Heart left ventricle (tissue), 16 donors: ENCODE measurements at regions of chr18 and their contacts with region 1.

Region 1: DNA sequence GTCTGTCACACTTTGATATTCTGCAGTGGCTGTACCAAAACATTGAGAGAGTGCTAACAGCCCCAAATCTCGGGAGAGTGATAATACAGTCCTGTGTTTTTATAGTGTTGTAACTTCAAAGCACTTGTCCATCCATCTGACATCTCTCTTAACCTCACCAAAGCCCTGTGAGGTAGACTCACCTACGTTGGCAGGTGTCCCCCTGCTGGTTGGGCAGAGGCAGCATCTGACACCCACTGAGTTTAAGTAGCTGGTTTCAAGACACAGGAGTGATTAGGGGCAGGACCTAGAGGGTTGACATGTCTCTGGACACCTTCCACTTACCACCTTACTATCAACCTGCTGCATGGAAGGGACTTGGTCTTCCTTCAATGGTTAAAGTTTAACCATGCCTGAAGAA is 22.9 kb downstream of the COLEC12 start:
- DNase-seq: no peak
- ATAC-seq: no peak
- H3K4me3 ChIP-seq: no peak overlapping the region
- H3K27ac ChIP-seq: peak overlapping the region in 1 of 12 donors; percentile 58
- H3K4me1 ChIP-seq: peaks cover 0 to 33% (median 6%) of the 10 kb centered on the region in 12 donors
- H3K27me3 ChIP-seq: no peaks in the 10 kb centered on the region
- CTCF ChIP-seq: peak in 1 of 12 donors; percentile 12
- POLR2A ChIP-seq: no peak

Region 2: GRCh38 chr18:293536-293935 is 184.0 kb before region 1 on chr18:
- intact Hi-C with region 1: loop called in 1 of 10 experiments (anchors 10 kb)
- DNase-seq: no peak
- ATAC-seq: no peak
- H3K4me3 ChIP-seq: no peak overlapping the region
- H3K27ac ChIP-seq: no peak overlapping the region
- H3K4me1 ChIP-seq: peaks cover 0 to 7% (median 0%) of the 10 kb centered on the region in 12 donors
- H3K27me3 ChIP-seq: no peaks in the 10 kb centered on the region
- CTCF ChIP-seq: peak in 5 of 12 donors; percentile 8 to 35 (median 25)
- POLR2A ChIP-seq: no peak

Region 3: GRCh38 chr18:427005-427404 is 50.6 kb before region 1 on chr18:
- intact Hi-C with region 1: no loop called
- DNase-seq: peak in 1 of 5 donors; percentile 20
- ATAC-seq: peak; percentile 42 to 76 (median 68)
- H3K4me3 ChIP-seq: no peak overlapping the region
- H3K27ac ChIP-seq: no peak overlapping the region
- H3K4me1 ChIP-seq: peaks cover 0 to 22% (median 12%) of the 10 kb centered on the region in 12 donors
- H3K27me3 ChIP-seq: no peaks in the 10 kb centered on the region
- CTCF ChIP-seq: no peak
- POLR2A ChIP-seq: no peak

Region 4: DNA sequence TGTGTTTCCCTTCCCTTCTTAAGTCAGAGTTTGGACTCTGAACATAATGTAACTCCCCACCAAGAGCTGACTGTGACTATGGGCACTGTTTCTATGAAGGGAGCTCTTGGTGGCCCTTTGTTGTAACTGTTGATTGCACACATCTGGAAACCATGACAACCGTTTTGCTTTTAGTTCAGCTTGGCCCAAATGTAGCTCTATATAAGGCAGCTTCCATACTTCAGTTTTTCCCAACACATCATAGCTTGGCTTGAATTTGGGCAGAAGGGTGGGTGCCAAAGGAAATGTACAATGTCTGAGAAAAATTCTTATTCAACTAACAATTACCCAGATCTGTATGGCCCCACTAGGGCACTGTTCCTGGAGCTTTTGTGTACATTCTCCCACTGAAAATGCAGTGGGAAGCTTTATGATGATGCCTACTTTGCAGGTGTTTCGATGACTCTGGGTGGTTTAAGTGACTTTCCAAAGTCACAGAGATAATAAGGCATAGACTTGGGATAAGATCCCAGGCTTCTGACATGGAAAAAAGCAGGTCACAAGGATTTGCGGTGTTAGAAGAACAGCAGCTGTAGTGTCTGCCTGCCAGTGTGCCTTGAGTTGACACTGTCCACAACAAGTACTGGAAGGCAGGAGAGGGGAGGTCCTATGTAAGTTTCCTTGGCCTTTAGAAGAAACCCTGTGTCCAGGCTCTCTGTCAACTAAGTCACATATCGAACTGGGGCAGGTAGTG is 100.2 kb after region 1 on chr18:
- intact Hi-C with region 1: loop called in 1 of 10 experiments (anchors 10 kb)
- DNase-seq: no peak
- ATAC-seq: no peak
- H3K4me3 ChIP-seq: no peak overlapping the region
- H3K27ac ChIP-seq: no peak overlapping the region
- H3K4me1 ChIP-seq: peaks cover 0 to 25% (median 0%) of the 10 kb centered on the region in 12 donors
- H3K27me3 ChIP-seq: no peaks in the 10 kb centered on the region
- CTCF ChIP-seq: no peak
- POLR2A ChIP-seq: no peak

Region 5: DNA sequence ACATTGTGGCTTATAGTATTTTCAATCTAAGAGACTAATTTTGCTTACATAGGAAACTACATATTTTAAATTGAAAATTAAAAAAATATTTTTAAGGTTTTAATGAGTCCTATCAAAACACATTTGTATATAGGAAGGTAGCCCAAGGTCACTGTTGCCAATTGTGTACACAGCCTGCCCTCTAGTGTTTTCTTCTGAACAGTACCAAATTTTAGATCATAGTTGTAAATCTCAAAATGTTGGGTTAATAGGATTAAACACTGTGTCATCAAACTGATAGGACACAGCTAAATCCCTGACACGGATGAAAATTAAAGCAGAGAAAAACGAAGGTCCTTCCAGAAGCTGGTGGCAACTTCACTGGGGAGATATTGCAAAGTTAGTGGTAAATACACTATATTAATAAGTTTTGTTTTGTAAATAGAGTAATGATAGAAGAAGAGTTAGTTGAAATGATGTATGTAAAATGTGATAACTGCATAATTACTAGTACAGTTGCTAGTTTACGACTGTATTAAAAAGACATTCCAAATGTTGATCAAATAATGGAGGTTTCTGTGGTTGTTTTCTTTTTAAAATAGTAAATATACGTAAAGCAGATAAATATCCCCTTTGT is 138.9 kb after region 1 on chr18:
- intact Hi-C with region 1: loop called in 1 of 10 experiments (anchors 10 kb)
- DNase-seq: no peak
- ATAC-seq: peak in 3 of 4 donors; percentile 69 to 76 (median 69)
- H3K4me3 ChIP-seq: no peak overlapping the region
- H3K27ac ChIP-seq: peak overlapping the region in 1 of 12 donors; percentile 91
- H3K4me1 ChIP-seq: peaks cover 0 to 17% (median 0%) of the 10 kb centered on the region in 12 donors
- H3K27me3 ChIP-seq: peaks cover 0 to 2% (median 0%) of the 10 kb centered on the region in 9 donors
- CTCF ChIP-seq: peak; percentile 58 to 87 (median 78)
- POLR2A ChIP-seq: no peak